ENCODE measurements at regions of chr3 and their contacts with region 1.

Region 1: DNA sequence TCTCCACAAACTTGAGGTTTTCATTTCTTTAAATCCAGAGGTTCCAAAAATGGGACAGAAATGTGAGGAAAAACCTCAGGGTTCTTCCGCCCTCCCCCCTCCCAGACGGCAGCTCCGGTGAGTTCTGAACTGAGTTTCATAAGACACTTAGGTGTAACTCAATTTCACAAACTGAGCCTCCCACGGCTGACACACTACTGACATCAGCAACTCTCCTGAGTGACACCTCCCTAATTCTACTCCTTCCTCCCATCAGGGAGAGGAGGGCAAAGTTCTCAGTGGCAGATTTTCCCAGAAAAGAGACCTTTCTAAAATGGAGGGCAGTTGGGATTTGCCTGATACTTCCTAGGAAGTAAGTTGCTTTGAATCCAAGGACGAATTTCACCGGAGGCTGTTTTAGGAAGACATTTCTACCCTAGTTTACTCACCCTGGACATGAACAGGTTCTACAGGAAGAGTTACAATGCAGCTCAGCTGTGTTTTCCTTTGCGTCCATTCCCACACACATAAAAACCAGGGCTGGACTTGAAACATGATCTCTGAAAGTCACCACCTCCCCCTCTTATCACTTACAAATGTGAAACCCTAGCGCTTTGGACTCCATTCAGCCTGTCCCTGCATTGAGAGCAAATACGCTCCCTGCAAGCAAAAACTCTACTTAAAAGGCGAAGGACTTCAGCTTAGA is 78.1 kb upstream of the LMOD3 start:
- DNase-seq: peak; percentile 88
- ATAC-seq: peak; percentile 95
- H3K4me3 ChIP-seq: peak overlapping the region; percentile 58 to 96 (median 71)
- H3K27ac ChIP-seq: peak overlapping the region; percentile 98
- H3K4me1 ChIP-seq: peaks cover 18% of the 10 kb centered on the region
- H3K27me3 ChIP-seq: no peaks in the 10 kb centered on the region
- CTCF ChIP-seq: no peak
- EP300 ChIP-seq: peak in 1 of 2 experiments; percentile 31; a peak in 1 of 4 replicates
- POLR2A ChIP-seq: peak in 1 of 2 experiments; percentile 80; a peak in 2 of 4 replicates
- RAD21 ChIP-seq: no peak

Region 2: DNA sequence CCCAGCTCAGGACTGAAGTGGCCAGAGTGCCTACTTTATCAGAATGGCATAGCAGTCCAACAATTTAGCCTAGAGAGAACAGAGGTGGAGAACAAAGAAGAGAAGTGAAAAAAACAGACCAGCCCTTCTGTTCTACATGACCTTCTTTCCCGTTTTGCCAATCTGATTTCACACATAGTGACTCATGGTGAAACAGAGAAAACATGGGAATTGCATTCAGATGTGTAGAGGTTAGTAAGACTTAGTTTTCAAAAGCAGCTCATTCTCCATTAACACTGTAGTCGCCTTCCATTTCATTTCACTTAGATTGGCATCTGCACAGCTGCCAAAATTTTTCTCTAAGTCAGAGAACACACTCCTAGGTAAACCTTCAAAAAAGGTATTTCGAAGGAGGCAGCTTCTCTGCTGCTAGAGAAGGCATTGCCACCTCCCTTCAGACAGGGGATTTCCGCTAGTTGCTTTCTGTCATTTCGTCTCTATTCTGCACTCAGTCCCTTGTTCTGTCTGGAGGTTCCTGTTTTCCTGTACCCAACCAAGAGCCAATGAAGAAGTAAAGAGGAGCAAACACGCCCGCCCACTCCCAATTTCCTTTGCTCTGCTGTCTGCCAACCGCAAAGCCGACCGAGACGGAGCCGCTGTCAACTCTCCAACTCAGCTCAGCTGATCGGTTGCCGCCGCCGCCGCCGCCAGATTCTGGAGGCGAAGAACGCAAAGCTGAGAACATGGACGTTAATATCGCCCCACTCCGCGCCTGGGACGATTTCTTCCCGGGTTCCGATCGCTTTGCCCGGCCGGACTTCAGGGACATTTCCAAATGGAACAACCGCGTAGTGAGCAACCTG is 116.0 kb before region 1 on chr3 and contains the start of gene ARL6IP5:
- CTCF ChIA-PET with region 1: no interaction called
- POLR2A ChIA-PET with region 1: interaction called, 3 read pairs
- in situ Hi-C with region 1: no loop called
- intact Hi-C with region 1: loop called (anchors 1 kb)
- DNase-seq: peak; percentile 78
- ATAC-seq: peak; percentile 86
- H3K4me3 ChIP-seq: peak within 1 kb of the TSS; percentile 73 to 91 (median 88)
- H3K27ac ChIP-seq: peak within 1 kb of the TSS; percentile 64
- H3K4me1 ChIP-seq: peaks cover 57% of the 10 kb centered on the region
- H3K27me3 ChIP-seq: no peaks in the 10 kb centered on the region; a peak in 1 of 5 replicates
- CTCF ChIP-seq: no peak
- EP300 ChIP-seq: no peak
- POLR2A ChIP-seq: 0 out of 4 replicates have a peak, but pooled peaks of 1 of the 2 experiments have one; percentile 33
- RAD21 ChIP-seq: no peak
- total RNA-seq, gene ARL6IP5: 19.6 and 29.6 TPM in 2 replicates

Region 3: DNA sequence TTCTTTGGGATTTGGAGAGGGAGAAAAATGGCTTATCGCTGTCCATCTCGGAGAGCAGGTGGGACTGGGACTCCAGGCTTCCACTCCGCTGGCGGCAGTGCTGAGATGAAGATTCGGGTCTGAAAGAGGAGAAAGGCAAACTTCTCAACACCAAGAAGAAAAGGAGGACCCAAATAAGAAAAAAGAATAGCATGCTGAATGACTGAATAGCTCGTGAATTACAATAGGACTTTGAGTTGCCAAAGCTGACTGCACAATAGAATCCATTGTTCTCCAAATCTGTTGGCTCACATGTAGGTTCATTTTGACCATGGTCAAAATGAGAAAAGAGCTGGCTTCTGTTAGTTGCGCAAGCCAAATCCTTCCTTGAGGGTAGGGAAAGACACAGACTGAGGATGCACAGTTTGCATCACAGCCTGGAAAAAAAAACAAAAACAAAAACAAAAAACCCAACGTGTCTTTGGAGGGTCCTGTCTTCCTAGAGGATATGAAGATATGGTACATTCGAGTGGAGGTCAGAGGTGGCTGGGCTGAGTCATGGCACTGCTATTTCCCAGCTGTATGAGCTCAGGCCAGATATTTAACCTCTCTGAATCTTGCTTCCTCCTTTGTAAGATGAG is 18.8 kb before region 1 on chr3:
- CTCF ChIA-PET with region 1: no interaction called
- POLR2A ChIA-PET with region 1: interaction called, 11 read pairs
- in situ Hi-C with region 1: no loop called
- intact Hi-C with region 1: loop called (anchors 1 kb)
- DNase-seq: peak; percentile 80
- ATAC-seq: peak; percentile 50
- H3K4me3 ChIP-seq: no peak overlapping the region
- H3K27ac ChIP-seq: peak overlapping the region; percentile 93
- H3K4me1 ChIP-seq: peaks cover 58% of the 10 kb centered on the region
- H3K27me3 ChIP-seq: no peaks in the 10 kb centered on the region
- CTCF ChIP-seq: no peak
- EP300 ChIP-seq: peak in 1 of 2 experiments; percentile 30; a peak in 1 of 4 replicates
- POLR2A ChIP-seq: no peak
- RAD21 ChIP-seq: no peak

Region 4: DNA sequence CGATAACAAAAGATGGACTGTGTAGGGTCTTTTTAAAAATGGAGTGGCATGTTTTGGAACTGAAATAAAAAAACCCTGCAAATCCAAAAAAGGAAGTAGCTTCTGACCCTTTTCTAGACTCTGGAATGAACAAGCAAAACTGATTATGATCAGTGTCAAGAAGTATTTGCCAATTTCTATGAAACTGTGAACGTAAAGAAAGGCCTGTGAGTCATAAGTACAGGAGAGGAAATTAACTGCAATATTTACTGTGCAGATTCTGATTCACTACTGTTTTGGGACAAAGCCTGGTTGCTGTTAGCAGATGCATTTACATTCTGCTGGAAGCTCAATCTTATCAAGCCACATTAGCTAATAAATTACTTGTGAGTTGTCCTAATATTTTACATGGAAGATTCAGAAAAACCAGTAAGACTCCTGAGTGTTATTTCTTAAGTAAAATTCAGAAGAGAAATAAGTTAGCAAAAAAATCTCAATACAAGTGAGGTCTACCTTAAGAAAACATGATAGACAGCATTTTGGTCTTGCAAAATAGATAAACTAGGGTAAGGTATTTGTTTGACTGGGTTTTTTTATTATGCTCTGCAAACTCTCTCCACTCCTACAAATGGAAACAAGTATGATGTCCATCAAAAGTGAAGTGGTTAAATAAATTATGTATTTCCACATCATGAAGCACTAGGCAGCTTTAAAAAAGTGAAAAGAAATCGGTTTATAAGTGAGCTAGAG is 12.0 kb after region 1 on chr3:
- CTCF ChIA-PET with region 1: no interaction called
- POLR2A ChIA-PET with region 1: interaction called, 3 read pairs
- in situ Hi-C with region 1: no loop called
- intact Hi-C with region 1: loop called (anchors 1 kb)
- DNase-seq: peak; percentile 63
- ATAC-seq: peak; percentile 65
- H3K4me3 ChIP-seq: no peak overlapping the region
- H3K27ac ChIP-seq: no peak overlapping the region
- H3K4me1 ChIP-seq: peaks cover 17% of the 10 kb centered on the region
- H3K27me3 ChIP-seq: no peaks in the 10 kb centered on the region
- CTCF ChIP-seq: no peak
- EP300 ChIP-seq: 0 out of 4 replicates have a peak, but pooled peaks of 1 of the 2 experiments have one; percentile 8
- POLR2A ChIP-seq: no peak
- RAD21 ChIP-seq: no peak

Region 5: GRCh38 chr3:69240651-69241568 is 40.4 kb after region 1 on chr3:
- CTCF ChIA-PET with region 1: no interaction called
- POLR2A ChIA-PET with region 1: no interaction called
- in situ Hi-C with region 1: no loop called
- intact Hi-C with region 1: no loop called
- DNase-seq: no peak
- ATAC-seq: no peak
- H3K4me3 ChIP-seq: no peak overlapping the region
- H3K27ac ChIP-seq: no peak overlapping the region
- H3K4me1 ChIP-seq: 0 out of 2 replicates have a peak, but pooled peaks cover 9% of the 10 kb centered on the region
- H3K27me3 ChIP-seq: no peaks in the 10 kb centered on the region; a peak in 1 of 5 replicates
- CTCF ChIP-seq: no peak
- EP300 ChIP-seq: no peak
- POLR2A ChIP-seq: no peak
- RAD21 ChIP-seq: no peak

Measured in HepG2 (cell line).